CD8-positive, alpha-beta T cell (primary cell): ENCODE measurements at regions of chr2 and their contacts with region 1.

Region 1: DNA sequence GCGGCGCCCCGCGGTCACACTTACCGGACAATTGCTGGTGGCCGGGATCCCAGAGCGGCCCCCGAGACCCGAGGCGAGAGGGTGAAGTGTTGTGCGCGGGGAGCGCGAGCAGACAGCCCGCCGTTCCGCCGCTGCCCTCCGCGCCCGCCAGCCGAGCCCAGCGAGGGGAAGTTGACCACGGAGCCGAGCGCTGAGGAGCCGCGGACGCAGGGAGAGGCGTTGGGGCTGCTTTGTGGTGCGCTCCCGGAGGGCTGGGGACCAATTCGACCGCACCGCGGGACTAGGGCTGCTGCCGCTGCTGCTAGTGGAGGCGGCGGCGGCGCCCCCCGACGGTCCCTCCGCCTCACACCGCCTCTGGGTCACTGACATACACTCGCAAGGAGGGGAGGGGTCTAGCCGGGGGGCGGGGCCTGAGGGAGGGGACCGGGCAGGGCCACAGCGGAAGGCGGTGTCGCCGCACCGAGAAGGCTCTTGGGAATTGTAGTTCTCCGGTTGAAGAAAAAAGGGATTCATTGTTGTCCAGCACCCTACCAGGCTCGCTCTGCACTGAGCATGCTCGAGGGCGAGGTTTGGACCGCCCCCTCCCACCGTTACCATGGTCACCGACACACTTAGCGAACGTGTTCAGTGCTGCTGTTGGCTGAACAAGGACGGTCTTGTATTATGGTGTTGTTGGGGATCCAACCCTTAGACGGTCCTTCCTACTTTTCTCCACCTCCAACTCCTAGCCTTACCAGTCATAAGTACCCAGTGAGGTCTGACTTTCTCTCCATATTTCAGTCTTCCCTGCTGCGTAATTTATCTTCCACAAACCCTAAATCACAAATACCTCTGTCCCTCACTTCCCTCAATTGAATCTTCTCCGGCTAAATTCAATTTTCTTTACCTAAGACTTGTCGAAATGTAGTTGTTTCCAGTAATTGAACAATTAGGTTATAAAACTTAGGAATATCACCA is at the start of gene PELI1:
- DNase-seq: peak; percentile 86 to 94 (median 91)
- ATAC-seq: peak; percentile 93
- H3K4me3 ChIP-seq: peak within 1 kb of the TSS; percentile 86 to 87
- H3K4me3 Mint-ChIP-seq: peak within 1 kb of the TSS; percentile 98
- H3K27ac ChIP-seq: peak within 1 kb of the TSS; percentile 78 to 91
- H3K27ac Mint-ChIP-seq: peak within 1 kb of the TSS; percentile 99
- H3K4me1 ChIP-seq: peaks cover 13% of the 10 kb centered on the region
- H3K4me1 Mint-ChIP-seq: peaks cover 34% of the 10 kb centered on the region
- H3K27me3 ChIP-seq: no peaks in the 10 kb centered on the region
- H3K27me3 Mint-ChIP-seq: no peaks in the 10 kb centered on the region
- CTCF ChIP-seq: no peak
- total RNA-seq, gene PELI1: 213 to 216 TPM

Region 2: DNA sequence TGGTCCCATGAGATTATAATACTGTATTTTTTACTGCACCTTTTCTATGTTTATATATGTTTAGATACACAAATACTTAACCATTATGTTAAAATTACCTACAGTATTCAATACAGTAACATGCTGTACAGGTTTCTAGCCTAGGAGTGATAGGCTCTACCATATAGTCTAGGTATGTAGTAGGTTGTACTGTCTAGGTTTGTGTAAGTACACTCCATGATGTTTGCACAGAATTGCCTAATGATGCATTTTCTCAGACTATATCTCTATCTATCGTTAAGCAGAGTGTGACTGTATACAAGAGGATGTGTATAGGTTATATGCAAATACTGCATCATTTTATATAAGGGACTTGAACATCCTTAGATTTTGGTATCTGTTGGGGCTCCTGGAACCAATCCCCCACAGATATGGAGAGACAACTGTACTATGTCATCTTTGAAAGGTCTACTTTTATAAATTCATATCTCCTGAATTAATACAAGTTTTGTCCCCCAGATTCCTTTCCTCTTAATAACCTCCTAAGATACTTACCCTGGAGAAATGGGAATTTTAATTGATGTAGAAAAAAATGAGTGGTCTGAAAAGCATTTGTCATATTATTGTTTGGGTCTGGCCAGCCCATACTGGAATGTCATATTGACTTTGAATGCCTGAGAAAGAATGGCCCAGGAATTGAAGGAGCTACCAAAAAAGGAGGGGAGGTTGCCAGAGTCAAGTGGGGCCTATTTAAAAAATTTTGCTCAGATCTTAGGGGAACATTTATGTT is 1402.2 kb before region 1 on chr2:
- CTCF ChIA-PET with region 1: no interaction called
- POLR2A ChIA-PET with region 1: no interaction called
- intact Hi-C with region 1: no loop called
- DNase-seq: no peak
- ATAC-seq: no peak
- H3K4me3 ChIP-seq: no peak overlapping the region
- H3K4me3 Mint-ChIP-seq: no peak overlapping the region
- H3K27ac ChIP-seq: no peak overlapping the region
- H3K27ac Mint-ChIP-seq: no peak overlapping the region
- H3K4me1 ChIP-seq: no peaks in the 10 kb centered on the region
- H3K4me1 Mint-ChIP-seq: peaks cover 26% of the 10 kb centered on the region
- H3K27me3 ChIP-seq: no peaks in the 10 kb centered on the region
- H3K27me3 Mint-ChIP-seq: no peaks in the 10 kb centered on the region
- CTCF ChIP-seq: no peak

Region 3: GRCh38 chr2:64018923-64019718 is 125.2 kb before region 1 on chr2 and contains the start of gene VPS54:
- CTCF ChIA-PET with region 1: interaction called, 3 read pairs
- POLR2A ChIA-PET with region 1: no interaction called
- intact Hi-C with region 1: loop called (anchors 1 to 5 kb)
- DNase-seq: peak; percentile 22 to 80 (median 57)
- ATAC-seq: peak; percentile 65
- H3K4me3 ChIP-seq: peak within 1 kb of the TSS; percentile 79 to 89
- H3K4me3 Mint-ChIP-seq: peak within 1 kb of the TSS; percentile 96
- H3K27ac ChIP-seq: peak within 1 kb of the TSS; percentile 57 to 77
- H3K27ac Mint-ChIP-seq: peak within 1 kb of the TSS; percentile 97
- H3K4me1 ChIP-seq: peaks cover 31% of the 10 kb centered on the region
- H3K4me1 Mint-ChIP-seq: peaks cover 46% of the 10 kb centered on the region
- H3K27me3 ChIP-seq: no peaks in the 10 kb centered on the region
- H3K27me3 Mint-ChIP-seq: no peaks in the 10 kb centered on the region
- CTCF ChIP-seq: no peak
- total RNA-seq, gene VPS54: 7.0 to 8.5 TPM

Region 4: GRCh38 chr2:64052468-64053241 is 91.7 kb before region 1 on chr2:
- CTCF ChIA-PET with region 1: interaction called, 10 read pairs
- POLR2A ChIA-PET with region 1: no interaction called
- intact Hi-C with region 1: loop called (anchors 1 to 2 kb)
- DNase-seq: peak in 5 of 9 experiments; percentile 11 to 43 (median 24)
- ATAC-seq: peak; percentile 53
- H3K4me3 ChIP-seq: no peak overlapping the region
- H3K4me3 Mint-ChIP-seq: no peak overlapping the region
- H3K27ac ChIP-seq: no peak overlapping the region
- H3K27ac Mint-ChIP-seq: peak overlapping the region; percentile 34
- H3K4me1 ChIP-seq: peaks cover 20% of the 10 kb centered on the region
- H3K4me1 Mint-ChIP-seq: peaks cover 42% of the 10 kb centered on the region
- H3K27me3 ChIP-seq: no peaks in the 10 kb centered on the region
- H3K27me3 Mint-ChIP-seq: no peaks in the 10 kb centered on the region
- CTCF ChIP-seq: no peak

Region 5: DNA sequence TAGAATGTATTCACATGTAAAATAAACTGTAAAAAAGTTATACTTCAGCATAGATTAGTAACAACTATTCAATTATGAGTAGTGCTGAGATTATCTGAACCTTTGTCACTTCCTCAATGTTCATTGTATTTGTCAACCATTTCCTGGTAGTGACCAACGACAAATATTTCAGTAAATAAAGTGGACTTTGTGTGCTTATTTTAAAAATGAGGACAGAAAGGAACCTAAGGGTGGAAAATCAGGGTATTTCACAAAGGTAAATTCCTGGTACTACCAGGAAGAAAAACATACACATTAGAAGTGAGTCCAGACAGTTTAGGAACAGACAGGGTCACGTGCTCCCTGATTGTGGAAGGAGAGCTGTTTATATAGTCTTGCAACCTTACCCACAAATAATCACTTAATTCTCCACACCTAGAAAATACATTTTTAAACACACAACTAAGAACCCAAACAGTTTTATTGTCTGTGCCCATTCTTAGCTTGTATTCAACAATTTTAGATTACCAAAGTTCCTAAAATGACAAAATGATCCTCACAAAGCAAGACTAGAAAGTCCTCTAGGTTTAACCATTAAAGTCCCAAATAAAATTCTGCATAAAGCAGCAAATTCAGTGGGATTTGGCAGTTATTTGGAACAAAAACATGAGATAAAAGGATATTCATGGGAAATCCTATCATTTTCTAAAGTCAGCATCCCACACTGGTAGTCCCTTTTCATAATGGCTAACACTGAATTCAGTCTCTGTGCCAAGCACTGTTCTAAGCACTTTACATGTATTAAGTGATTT is 28.3 kb before region 1 on chr2:
- CTCF ChIA-PET with region 1: no interaction called
- POLR2A ChIA-PET with region 1: no interaction called
- intact Hi-C with region 1: loop called in 1 of 2 experiments (anchors 2 kb)
- DNase-seq: no peak
- ATAC-seq: no peak
- H3K4me3 ChIP-seq: no peak overlapping the region
- H3K4me3 Mint-ChIP-seq: no peak overlapping the region
- H3K27ac ChIP-seq: no peak overlapping the region
- H3K27ac Mint-ChIP-seq: no peak overlapping the region
- H3K4me1 ChIP-seq: peaks cover 33% of the 10 kb centered on the region
- H3K4me1 Mint-ChIP-seq: peaks cover 72% of the 10 kb centered on the region
- H3K27me3 ChIP-seq: no peaks in the 10 kb centered on the region
- H3K27me3 Mint-ChIP-seq: no peaks in the 10 kb centered on the region
- CTCF ChIP-seq: no peak

Region 6: GRCh38 chr2:64165706-64166105 is 21.4 kb after region 1 on chr2:
- CTCF ChIA-PET with region 1: no interaction called
- POLR2A ChIA-PET with region 1: no interaction called
- intact Hi-C with region 1: no loop called
- DNase-seq: no peak
- ATAC-seq: no peak
- H3K4me3 ChIP-seq: no peak overlapping the region
- H3K4me3 Mint-ChIP-seq: no peak overlapping the region
- H3K27ac ChIP-seq: no peak overlapping the region
- H3K27ac Mint-ChIP-seq: no peak overlapping the region
- H3K4me1 ChIP-seq: no peaks in the 10 kb centered on the region
- H3K4me1 Mint-ChIP-seq: no peaks in the 10 kb centered on the region
- H3K27me3 ChIP-seq: no peaks in the 10 kb centered on the region
- H3K27me3 Mint-ChIP-seq: no peaks in the 10 kb centered on the region
- CTCF ChIP-seq: no peak

Region 7: DNA sequence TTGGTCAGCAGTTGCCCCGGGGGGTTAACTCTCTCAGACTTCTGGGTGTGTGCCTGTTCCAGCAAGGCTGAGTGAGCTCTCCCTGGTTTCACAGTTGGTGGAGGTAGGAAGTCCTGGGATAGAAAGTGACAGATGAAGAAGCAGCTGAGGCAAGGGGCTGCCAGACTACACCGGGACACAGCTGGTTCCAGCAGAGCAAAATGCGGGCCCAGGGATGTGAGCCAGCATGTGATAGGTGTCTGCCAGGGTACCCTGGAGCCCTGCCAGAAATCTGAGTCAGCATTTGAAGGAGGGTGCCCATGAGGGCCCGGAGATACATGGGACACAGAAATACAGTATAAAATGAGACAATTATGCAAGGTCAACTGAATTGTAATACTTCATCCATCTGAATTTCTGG is 230.4 kb after region 1 on chr2:
- CTCF ChIA-PET with region 1: no interaction called
- POLR2A ChIA-PET with region 1: no interaction called
- intact Hi-C with region 1: no loop called
- DNase-seq: no peak
- ATAC-seq: no peak
- H3K4me3 ChIP-seq: no peak overlapping the region
- H3K4me3 Mint-ChIP-seq: no peak overlapping the region
- H3K27ac ChIP-seq: no peak overlapping the region
- H3K27ac Mint-ChIP-seq: no peak overlapping the region
- H3K4me1 ChIP-seq: no peaks in the 10 kb centered on the region
- H3K4me1 Mint-ChIP-seq: no peaks in the 10 kb centered on the region
- H3K27me3 ChIP-seq: no peaks in the 10 kb centered on the region
- H3K27me3 Mint-ChIP-seq: no peaks in the 10 kb centered on the region
- CTCF ChIP-seq: no peak

Region 8: GRCh38 chr2:64750817-64751285 is 606.5 kb after region 1 on chr2:
- CTCF ChIA-PET with region 1: no interaction called
- POLR2A ChIA-PET with region 1: no interaction called
- intact Hi-C with region 1: loop called in 1 of 2 experiments (anchors 5 kb)
- DNase-seq: peak; percentile 95 to 100 (median 97)
- ATAC-seq: peak; percentile 81
- H3K4me3 ChIP-seq: peak overlapping the region; percentile 86 to 99
- H3K4me3 Mint-ChIP-seq: peak overlapping the region; percentile 99
- H3K27ac ChIP-seq: peak overlapping the region; percentile 88 to 95
- H3K27ac Mint-ChIP-seq: peak overlapping the region; percentile 95
- H3K4me1 ChIP-seq: peaks cover 19% of the 10 kb centered on the region
- H3K4me1 Mint-ChIP-seq: peaks cover 31% of the 10 kb centered on the region
- H3K27me3 ChIP-seq: no peaks in the 10 kb centered on the region
- H3K27me3 Mint-ChIP-seq: no peaks in the 10 kb centered on the region
- CTCF ChIP-seq: no peak

Region 9: DNA sequence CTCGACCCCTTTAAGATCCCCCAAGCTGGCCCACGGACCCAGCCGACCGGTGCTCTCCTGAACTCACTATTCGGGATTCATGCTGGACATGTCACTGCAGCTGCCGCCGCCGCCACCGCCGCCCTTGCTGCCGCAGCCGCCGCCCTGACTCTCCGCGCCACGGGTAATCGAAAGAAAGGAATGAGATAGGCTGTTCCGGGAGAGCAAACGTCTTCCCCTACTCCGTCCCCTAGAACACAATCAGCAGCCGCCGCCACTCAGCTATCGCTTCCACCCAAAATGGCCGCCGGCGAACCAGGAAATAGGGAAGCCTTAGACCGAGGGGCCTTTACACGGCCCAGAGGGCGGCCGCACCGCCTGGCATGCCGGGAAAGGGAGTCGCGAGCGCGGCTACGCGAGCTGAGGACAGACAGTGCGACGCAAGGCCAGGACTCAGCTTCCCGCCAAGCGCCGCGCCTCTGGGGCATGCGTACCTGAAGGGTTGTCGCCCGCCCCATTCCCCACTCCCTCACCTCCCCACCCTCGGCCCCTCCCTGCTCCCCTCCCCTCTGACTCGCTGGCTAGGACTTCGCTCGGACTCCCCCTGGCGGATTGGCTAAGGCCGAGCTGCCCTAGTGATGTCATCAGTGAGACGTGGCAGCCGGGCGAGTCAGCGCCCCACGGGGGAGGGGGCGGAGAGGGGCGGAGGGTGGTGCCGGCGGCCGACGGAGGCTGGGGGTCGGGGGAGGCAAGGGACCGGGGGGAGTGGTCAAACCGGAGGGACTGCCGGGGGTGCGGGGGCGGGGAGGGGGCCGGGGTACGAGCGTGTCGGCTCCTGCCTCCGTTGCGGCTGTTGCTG is 985.7 kb after region 1 on chr2 and contains the start of gene RAB1A:
- CTCF ChIA-PET with region 1: no interaction called
- POLR2A ChIA-PET with region 1: interaction called, 4 read pairs
- intact Hi-C with region 1: loop called (anchors 1 to 10 kb)
- DNase-seq: peak; percentile 98 to 100 (median 99)
- ATAC-seq: peak; percentile 94
- H3K4me3 ChIP-seq: peak within 1 kb of the TSS; percentile 87 to 88
- H3K4me3 Mint-ChIP-seq: peak within 1 kb of the TSS; percentile 99
- H3K27ac ChIP-seq: peak within 1 kb of the TSS; percentile 91 to 97
- H3K27ac Mint-ChIP-seq: peak within 1 kb of the TSS; percentile 98
- H3K4me1 ChIP-seq: peaks cover 40% of the 10 kb centered on the region
- H3K4me1 Mint-ChIP-seq: peaks cover 44% of the 10 kb centered on the region
- H3K27me3 ChIP-seq: no peaks in the 10 kb centered on the region
- H3K27me3 Mint-ChIP-seq: no peaks in the 10 kb centered on the region
- CTCF ChIP-seq: no peak
- total RNA-seq, gene RAB1A: 101 to 103 TPM